ENCODE measurements at regions of chr7 and their contacts with region 1.

Region 1: GRCh38 chr7:8115547-8116402 is 146.2 kb downstream of the ICA1 start:
- DNase-seq: no peak
- ATAC-seq: peak; percentile 92
- H3K4me3 Mint-ChIP-seq: peak overlapping the region; percentile 46
- H3K27ac Mint-ChIP-seq: peak overlapping the region; percentile 74
- H3K4me1 Mint-ChIP-seq: peaks cover 48% of the 10 kb centered on the region
- H3K27me3 Mint-ChIP-seq: no peaks in the 10 kb centered on the region
- CTCF ChIP-seq: no peak

Region 2: GRCh38 chr7:7257899-7258692 is 857.7 kb before region 1 on chr7:
- CTCF ChIA-PET with region 1: no interaction called
- POLR2A ChIA-PET with region 1: no interaction called
- intact Hi-C with region 1: loop called (anchors 10 kb)
- DNase-seq: no peak
- ATAC-seq: peak; percentile 77
- H3K4me3 Mint-ChIP-seq: peak overlapping the region; percentile 78
- H3K27ac Mint-ChIP-seq: peak overlapping the region; percentile 89
- H3K4me1 Mint-ChIP-seq: peaks cover 66% of the 10 kb centered on the region
- H3K27me3 Mint-ChIP-seq: no peaks in the 10 kb centered on the region
- CTCF ChIP-seq: no peak

Region 3: DNA sequence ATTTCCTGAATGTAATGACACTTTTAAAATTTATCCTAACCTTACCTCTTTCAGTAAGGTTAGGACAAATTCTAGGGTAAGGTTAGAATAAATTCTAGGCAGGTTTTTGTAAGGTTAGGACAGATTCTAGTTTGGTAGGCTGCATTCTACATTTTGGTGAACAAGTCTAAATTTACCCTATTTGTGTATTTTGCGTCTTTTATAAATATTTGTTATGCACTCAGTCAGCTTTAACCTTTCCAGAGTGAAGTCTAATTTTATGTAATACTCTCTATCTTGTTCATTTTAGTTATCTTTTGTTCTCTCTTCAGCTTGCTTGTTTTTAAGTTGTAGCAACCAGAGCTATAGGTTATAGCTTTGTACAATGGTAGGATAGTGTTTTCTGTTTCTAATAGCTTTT is 93.1 kb before region 1 on chr7:
- CTCF ChIA-PET with region 1: no interaction called
- POLR2A ChIA-PET with region 1: no interaction called
- intact Hi-C with region 1: no loop called
- DNase-seq: no peak
- ATAC-seq: no peak
- H3K4me3 Mint-ChIP-seq: no peak overlapping the region
- H3K27ac Mint-ChIP-seq: no peak overlapping the region
- H3K4me1 Mint-ChIP-seq: peaks cover 5% of the 10 kb centered on the region
- H3K27me3 Mint-ChIP-seq: no peaks in the 10 kb centered on the region
- CTCF ChIP-seq: no peak

Region 4: DNA sequence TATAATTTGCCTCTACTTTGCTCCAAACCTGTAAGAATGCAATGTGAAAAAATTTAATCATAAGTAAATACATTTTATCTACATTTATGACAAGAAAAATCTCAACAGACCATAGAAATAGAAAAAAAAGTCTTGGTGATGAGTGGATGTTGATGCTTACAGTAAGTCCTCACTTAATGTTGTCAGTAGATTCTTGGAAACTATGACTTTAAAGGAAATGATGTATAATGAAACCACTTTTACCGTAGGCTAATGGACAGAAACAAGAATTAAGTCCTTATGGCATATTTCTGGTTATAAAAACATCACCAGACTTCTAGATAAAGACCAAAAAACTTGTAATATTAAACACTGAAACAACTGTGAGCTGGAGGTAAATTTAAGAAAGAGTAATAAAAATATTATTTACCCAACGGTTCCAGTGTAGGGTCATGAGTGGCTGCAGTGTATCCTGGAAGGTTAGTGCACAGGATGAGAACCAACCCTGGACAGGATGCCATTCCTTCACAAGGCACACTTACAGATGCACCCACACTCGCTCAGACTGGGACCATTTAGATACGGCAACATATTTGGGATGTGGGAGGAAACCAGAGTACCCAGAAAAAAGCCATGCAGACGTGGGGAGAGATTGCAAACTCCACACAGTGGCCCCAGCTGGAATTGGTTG is 70.9 kb before region 1 on chr7:
- CTCF ChIA-PET with region 1: no interaction called
- POLR2A ChIA-PET with region 1: no interaction called
- intact Hi-C with region 1: loop called (anchors 2 kb)
- DNase-seq: no peak
- ATAC-seq: peak; percentile 14
- H3K4me3 Mint-ChIP-seq: no peak overlapping the region
- H3K27ac Mint-ChIP-seq: no peak overlapping the region
- H3K4me1 Mint-ChIP-seq: peaks cover 37% of the 10 kb centered on the region
- H3K27me3 Mint-ChIP-seq: no peaks in the 10 kb centered on the region
- CTCF ChIP-seq: no peak

Region 5: DNA sequence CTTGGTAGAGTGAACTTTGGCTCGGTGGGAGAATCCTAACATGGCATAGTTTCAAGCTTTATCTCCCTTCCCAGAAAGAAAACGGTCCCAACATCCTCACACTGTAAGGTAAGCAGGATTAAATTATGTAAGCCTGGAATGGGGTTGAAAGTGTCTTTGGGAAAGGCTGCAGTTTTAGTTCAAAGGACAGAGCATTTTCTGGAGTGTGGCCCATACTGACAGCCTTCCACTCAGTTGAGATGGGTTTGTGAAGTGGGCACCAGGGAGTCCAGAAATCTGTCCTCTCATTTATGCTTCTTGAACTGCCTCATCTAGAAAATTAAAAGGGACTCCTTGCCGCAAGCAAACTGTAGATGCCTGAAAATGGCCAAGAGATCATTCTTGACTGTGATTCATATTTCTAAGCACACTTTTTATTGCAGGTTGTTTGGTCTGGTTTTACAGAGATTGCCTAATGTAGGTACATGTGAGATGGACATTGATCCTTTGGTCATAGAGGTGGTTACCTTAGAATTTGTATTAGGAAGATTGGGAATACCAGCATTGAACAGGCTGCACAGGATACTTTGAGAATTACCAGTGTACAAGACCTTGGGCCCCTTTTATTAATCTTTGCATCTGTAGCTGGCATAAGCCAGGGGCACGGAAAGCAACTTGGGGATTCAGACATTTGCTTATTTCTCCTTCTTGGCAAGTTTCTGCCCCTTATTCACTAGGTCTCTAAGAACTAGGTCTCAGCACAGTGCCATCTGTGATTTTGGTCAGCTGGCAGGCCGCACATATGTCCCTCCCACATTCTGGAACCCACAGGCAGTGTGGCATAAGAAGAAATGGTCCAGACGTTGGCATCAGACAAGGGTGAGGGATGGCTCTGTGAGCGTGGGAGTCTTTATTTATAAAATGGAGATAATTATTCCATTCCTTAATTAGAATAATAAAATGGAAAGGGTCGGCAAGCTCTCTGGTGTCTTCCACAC is 21.3 kb before region 1 on chr7:
- CTCF ChIA-PET with region 1: no interaction called
- POLR2A ChIA-PET with region 1: no interaction called
- intact Hi-C with region 1: no loop called
- DNase-seq: no peak
- ATAC-seq: no peak
- H3K4me3 Mint-ChIP-seq: no peak overlapping the region
- H3K27ac Mint-ChIP-seq: no peak overlapping the region
- H3K4me1 Mint-ChIP-seq: no peaks in the 10 kb centered on the region
- H3K27me3 Mint-ChIP-seq: no peaks in the 10 kb centered on the region
- CTCF ChIP-seq: no peak

Region 6: DNA sequence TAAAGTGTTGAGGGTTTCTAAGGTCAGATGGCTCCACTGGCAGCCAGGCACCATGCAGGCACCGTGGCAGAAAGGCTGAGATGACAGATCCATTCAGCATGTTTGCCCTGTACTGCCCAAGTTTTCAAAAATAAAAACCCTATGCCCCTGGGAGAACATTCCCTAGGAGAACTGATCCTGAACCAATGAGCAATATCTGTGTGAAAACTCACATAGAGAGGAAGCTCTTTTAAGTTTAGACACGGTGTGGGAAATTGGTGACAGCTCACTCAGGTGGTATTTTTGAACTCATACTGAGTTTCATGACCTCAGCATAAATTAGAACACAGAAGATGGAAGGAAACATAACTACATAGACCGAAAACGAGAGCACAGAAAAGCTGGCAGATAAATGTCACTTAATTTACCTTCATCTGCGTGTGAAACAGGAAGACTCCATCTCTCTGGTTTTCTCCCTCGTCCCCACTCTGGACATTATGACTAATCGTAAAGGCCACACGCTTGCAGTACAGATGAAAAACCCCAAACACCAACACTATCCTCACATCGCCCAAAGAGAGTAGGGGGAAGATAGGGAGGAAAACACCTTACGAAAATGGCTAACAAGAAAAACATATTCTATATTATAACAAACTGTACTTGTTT is 18.4 kb after region 1 on chr7:
- CTCF ChIA-PET with region 1: interaction called, 3 read pairs
- POLR2A ChIA-PET with region 1: interaction called, 5 read pairs
- intact Hi-C with region 1: loop called (anchors 2 kb)
- DNase-seq: no peak
- ATAC-seq: peak; percentile 64
- H3K4me3 Mint-ChIP-seq: peak overlapping the region; percentile 1
- H3K27ac Mint-ChIP-seq: peak overlapping the region; percentile 51
- H3K4me1 Mint-ChIP-seq: peaks cover 50% of the 10 kb centered on the region
- H3K27me3 Mint-ChIP-seq: no peaks in the 10 kb centered on the region
- CTCF ChIP-seq: no peak

Region 7: GRCh38 chr7:8190119-8190895 is 74.5 kb after region 1 on chr7:
- CTCF ChIA-PET with region 1: interaction called, 3 read pairs
- POLR2A ChIA-PET with region 1: interaction called, 5 read pairs
- intact Hi-C with region 1: loop called (anchors 2 kb)
- DNase-seq: no peak
- ATAC-seq: peak; percentile 87
- H3K4me3 Mint-ChIP-seq: no peak overlapping the region
- H3K27ac Mint-ChIP-seq: no peak overlapping the region
- H3K4me1 Mint-ChIP-seq: peaks cover 20% of the 10 kb centered on the region
- H3K27me3 Mint-ChIP-seq: no peaks in the 10 kb centered on the region
- CTCF ChIP-seq: no peak

Region 8: DNA sequence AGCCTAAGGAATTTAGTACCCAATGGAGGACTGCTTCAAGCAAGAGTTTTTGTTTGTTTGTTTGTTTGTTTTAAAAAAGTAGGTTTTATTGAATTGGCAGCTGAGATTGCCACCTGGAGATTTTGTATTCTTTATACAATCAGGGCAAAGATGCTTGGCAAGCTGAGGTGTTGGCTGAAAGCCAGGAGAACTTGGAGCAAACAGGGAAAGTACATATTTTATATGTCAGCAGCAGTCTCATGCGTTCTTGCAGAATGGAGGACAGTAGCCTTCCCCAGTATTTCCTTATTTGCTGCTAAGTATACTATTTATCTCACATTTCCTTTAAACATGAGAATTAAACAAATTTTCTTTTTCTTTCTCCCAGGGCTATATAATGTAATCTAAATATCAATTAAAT is 168.8 kb after region 1 on chr7:
- CTCF ChIA-PET with region 1: no interaction called
- POLR2A ChIA-PET with region 1: no interaction called
- intact Hi-C with region 1: no loop called
- DNase-seq: no peak
- ATAC-seq: no peak
- H3K4me3 Mint-ChIP-seq: no peak overlapping the region
- H3K27ac Mint-ChIP-seq: no peak overlapping the region
- H3K4me1 Mint-ChIP-seq: no peaks in the 10 kb centered on the region
- H3K27me3 Mint-ChIP-seq: peaks cover 13% of the 10 kb centered on the region
- CTCF ChIP-seq: no peak